ENCODE measurements at regions of chr22 and their contacts with region 1.

Region 1: GRCh38 chr22:20931126-20931654 is 14.0 kb downstream of the CRKL start:
- DNase-seq: no peak

Region 2: DNA sequence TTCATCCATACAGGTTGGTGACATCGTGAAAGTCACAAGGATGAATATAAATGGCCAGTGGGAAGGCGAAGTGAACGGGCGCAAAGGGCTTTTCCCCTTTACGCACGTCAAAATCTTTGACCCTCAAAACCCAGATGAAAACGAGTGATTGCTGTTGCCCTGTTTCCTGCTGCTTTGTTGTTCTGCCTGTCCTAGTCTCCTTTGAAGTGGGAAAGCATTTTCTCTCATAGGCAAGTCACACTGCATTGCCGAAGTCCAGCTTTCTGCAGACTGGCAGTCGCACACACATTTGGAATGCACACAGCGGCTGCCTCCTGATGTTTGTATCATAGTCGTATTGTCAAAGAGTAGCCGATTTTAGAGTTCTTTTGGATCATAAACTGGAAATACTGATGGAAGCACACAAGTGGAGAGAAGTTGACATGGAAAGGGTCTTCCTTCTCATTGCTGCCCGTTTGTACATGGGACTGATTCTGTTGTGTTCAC is 18.6 kb after region 1 on chr22:
- intact Hi-C with region 1: loop called (anchors 2 kb)
- DNase-seq: no peak

Region 3: DNA sequence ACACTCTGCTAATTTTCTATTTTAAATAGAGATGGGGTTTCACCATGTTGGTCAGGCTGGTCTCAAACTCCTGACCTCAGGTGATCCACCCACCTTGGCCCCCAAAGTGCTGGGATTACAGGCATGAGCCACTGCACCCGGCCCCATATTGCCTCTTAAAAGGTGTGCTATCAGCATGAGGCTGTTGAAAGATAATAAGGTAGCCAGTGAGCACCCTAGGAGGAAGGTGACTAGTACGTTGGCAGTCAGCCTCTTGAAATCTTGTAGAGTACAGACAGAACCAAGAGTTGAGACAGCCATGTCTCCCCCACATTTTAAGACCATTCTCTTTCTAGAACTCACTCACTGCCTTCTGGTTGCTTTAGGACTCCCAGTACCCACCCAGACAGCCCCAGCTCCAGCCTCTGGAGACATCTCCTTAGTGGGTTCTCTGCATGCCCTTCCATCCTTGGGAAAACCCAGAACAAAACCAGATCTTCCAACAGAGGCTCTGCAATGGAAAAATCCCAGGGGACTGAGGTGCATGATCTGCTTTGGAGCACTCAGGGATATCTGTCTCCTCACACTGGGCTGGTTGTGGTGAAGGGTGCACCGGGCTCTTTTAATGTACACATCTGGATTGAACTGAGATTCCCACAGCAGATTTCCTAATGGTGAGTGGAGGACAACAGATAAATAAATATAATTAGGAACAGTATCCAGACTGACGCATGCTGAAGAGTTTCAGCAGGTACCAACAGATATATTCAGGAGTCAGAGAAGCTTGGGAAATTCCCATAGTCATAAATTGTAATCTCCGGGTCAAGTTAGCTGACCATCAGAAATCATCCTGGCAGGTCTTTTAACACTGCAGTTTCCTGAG is 164.0 kb after region 1 on chr22:
- intact Hi-C with region 1: no loop called
- DNase-seq: no peak

Measured in cardiac septum (tissue), 1 donor.